ENCODE measurements at regions of chr6 and their contacts with region 1.

Region 1: DNA sequence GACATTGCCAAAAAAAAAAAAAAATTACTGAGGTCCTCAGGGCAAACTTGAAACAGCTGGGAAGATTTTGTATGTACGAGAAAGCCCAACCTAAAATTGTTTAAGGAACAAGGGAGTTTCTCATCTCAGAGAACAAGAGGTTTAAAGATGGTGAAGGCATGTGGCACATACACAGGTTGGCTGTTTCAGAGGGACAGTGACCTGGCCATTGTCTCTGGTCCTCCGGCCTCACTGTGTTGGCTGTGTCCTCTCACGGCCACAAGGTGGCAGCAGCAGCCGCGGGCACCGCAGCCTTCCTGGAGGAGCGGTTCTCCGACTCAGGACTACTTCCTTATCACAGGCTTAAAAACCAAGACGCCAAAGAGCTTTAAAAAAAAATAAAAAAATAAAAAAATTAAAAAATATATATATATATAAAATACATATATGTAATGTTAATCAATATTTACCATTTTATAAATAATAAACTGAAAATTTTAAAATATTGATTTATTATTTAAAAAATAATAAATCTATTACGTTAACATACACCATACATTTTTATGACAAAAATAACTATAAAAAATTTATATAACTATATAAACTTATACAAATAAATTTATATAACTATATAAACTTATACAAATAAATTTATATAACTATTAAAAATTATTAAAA is 52.8 kb downstream of the GTF2H5 start:
- DNase-seq: peak; percentile 82 to 87 (median 85)
- ATAC-seq: peak; percentile 94
- H3K4me3 ChIP-seq: no peak overlapping the region
- H3K4me1 ChIP-seq: no peaks in the 10 kb centered on the region
- CTCF ChIP-seq: peak; percentile 92

Region 2: GRCh38 chr6:158284007-158284875 is 63.3 kb after region 1 on chr6:
- intact Hi-C with region 1: no loop called
- DNase-seq: peak in 1 of 3 donors; percentile 39
- ATAC-seq: peak; percentile 45
- H3K4me3 ChIP-seq: no peak overlapping the region
- H3K4me1 ChIP-seq: peaks cover 18% of the 10 kb centered on the region
- CTCF ChIP-seq: no peak

Region 3: GRCh38 chr6:158518191-158519127 is 297.5 kb after region 1 on chr6:
- intact Hi-C with region 1: loop called in 1 of 2 experiments (anchors 10 kb)
- DNase-seq: peak in 2 of 3 donors; percentile 45 to 58
- ATAC-seq: peak; percentile 91
- H3K4me3 ChIP-seq: no peak overlapping the region
- H3K4me1 ChIP-seq: peaks cover 9% of the 10 kb centered on the region
- CTCF ChIP-seq: peak; percentile 23

Region 4: DNA sequence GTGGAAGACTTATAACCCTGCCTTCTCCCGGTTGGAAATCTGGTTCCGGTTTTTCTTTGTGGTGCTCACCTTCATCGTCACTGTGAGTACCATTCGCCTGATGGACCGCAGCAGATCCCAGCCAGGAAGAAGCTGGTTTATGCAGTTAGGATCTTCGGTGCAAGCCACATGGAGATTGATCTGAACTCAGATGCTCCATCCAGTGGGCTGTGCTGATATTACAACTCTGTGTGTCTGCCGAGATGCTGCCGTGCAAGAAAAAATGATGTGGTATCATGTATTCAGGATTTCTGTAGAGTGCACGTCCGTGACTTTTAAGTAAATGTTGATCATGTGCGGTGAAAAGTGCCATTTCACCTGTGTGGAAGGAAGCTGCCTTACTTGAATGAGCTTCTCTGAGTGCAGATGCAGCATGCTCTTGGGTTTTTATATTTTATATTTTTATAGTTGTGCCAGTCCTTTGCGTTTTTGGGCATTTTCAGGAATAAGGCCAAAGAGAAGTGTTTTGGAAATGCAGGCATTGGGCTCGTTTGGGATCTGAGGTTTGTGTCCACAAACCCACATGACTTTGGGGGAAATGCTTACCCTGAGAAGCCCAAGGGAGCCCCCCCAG is 384.5 kb after region 1 on chr6:
- intact Hi-C with region 1: loop called in 1 of 2 experiments (anchors 10 kb)
- DNase-seq: peak in 2 of 3 donors; percentile 41 to 86
- ATAC-seq: peak; percentile 95
- H3K4me3 ChIP-seq: no peak overlapping the region
- H3K4me1 ChIP-seq: no peaks in the 10 kb centered on the region
- CTCF ChIP-seq: peak; percentile 44

Region 5: DNA sequence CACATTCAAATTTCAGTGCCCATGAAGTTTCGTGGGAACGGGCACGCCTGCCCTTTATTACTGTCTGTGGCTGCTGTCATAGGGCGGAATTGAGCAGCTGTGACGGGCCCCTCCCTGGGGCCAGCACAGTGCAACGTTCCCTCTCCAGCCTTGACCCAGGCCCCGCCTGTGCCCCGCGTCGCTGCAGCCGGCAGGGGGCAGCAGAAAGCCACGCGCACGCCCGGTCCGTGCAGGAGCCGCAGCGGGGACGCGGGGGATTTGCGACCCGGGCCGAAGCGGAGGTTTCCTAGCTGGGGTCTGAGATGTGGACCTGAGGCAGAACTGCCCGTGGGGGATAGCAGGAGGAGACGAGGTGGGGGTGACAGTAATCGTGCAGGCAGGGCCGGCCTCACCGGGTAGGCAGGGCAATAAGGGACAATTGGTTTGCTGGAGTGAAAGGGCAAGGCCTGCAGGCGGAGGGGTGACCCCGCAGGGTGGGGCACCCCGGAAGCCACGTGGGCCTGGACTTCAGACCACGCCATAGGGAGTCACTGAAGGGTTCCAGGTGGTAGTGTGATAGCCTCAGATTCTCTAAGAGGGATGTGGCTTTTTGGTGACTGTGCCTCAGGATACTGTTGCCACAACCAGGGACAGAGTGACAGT is 483.4 kb after region 1 on chr6:
- intact Hi-C with region 1: no loop called
- DNase-seq: peak; percentile 91 to 96 (median 91)
- ATAC-seq: peak; percentile 94
- H3K4me3 ChIP-seq: no peak overlapping the region
- H3K4me1 ChIP-seq: peaks cover 5% of the 10 kb centered on the region
- CTCF ChIP-seq: peak; percentile 98

Measured in mucosa of descending colon (tissue), 3 donors.